ENCODE measurements at regions of chr16 and their contacts with region 1.

Region 1: DNA sequence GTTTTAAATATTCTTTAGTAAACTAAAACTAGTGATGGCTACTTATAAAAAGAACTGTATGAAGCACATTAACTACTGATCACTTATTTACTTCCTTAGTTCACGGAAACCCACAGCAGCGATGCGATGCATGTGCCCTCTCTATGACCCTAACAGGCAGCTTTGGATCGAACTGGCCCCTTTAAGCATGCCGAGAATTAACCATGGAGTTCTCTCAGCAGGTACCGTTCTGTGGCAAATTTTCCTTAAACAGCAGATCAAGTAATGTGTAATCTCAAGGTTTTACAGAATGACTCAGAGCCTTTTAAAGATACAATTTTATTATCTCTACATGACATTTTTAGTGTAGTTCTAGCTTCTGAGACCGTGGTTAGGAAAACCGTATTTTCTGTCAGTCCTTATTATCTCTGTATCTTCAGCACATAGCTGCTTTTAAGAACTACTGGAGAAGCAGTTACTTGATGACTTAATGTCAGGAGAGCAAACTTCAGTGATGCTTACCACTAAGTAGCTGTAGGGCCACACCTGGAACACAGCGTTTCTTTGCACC is 43.0 kb downstream of the GAN start:
- DNase-seq: no peak
- H3K4me3 Mint-ChIP-seq: no peak overlapping the region
- H3K27ac Mint-ChIP-seq: no peak overlapping the region
- H3K4me1 Mint-ChIP-seq: peaks cover 14% of the 10 kb centered on the region
- H3K27me3 Mint-ChIP-seq: no peaks in the 10 kb centered on the region

Region 2: DNA sequence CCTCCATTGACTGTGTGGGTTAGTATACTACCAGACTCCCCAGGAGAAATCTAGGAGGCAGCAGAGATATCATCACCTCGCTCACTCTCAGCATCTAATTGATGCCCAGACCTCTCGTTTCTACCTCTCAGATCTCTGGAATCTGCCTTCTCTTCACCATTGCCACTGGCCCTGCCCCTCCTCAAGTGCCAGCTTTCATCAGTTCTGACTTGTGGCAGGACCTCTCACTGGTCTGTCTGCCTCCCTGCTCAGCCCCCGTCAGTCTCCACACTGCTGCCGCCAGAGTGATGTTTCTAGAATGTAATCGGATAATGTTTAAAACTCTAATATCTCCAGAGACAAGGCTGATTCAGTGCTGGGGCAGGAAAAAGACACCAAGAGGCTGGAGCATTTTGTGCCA is 27.8 kb before region 1 on chr16:
- intact Hi-C with region 1: loop called (anchors 1 kb)
- DNase-seq: no peak
- H3K4me3 Mint-ChIP-seq: no peak overlapping the region
- H3K27ac Mint-ChIP-seq: no peak overlapping the region
- H3K4me1 Mint-ChIP-seq: peaks cover 6% of the 10 kb centered on the region
- H3K27me3 Mint-ChIP-seq: no peaks in the 10 kb centered on the region